Heart left ventricle (tissue), 16 donors: ENCODE measurements at regions of chr7 and their contacts with region 1.

Region 1: DNA sequence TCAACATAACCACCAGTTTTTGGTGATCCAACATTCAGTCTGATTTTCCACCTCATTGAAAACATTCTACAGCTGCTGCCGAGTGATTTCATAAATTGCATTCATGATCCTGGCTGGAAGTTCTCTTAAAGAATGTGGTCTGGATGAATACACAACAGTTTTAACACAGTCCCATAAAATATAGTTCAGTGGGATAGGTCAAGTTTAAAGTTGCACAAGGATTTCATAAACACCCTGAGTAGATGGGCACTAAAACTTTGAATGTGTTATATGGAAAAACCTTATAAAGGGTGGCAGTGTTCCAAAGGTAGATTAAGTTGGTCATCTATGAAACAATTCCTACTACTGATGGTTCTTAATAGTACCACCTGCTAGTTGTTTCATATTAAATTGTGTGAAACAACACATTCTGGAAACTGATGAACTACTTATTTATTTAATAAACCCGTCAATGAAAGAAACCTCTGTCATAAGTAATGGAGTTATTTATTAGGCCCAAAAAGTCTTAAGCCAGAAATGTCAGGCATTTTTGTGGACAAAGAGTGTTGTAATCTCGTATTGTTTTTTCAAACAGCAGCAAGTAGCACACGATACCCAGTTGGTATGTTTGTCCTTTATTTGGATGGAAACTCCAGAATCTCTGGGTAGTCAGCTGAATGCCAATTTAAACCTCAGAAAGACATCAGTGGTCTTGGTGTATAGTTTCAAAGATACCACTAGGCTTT is 14.3 kb upstream of the RPA3 start:
- DNase-seq: no peak
- ATAC-seq: peak in 1 of 4 donors; percentile 49
- H3K4me3 ChIP-seq: no peak overlapping the region
- H3K27ac ChIP-seq: peak overlapping the region in 2 of 12 donors; percentile 11 to 54
- H3K4me1 ChIP-seq: peaks cover 0 to 24% (median 11%) of the 10 kb centered on the region in 12 donors
- H3K27me3 ChIP-seq: no peaks in the 10 kb centered on the region
- CTCF ChIP-seq: no peak
- POLR2A ChIP-seq: no peak

Region 2: DNA sequence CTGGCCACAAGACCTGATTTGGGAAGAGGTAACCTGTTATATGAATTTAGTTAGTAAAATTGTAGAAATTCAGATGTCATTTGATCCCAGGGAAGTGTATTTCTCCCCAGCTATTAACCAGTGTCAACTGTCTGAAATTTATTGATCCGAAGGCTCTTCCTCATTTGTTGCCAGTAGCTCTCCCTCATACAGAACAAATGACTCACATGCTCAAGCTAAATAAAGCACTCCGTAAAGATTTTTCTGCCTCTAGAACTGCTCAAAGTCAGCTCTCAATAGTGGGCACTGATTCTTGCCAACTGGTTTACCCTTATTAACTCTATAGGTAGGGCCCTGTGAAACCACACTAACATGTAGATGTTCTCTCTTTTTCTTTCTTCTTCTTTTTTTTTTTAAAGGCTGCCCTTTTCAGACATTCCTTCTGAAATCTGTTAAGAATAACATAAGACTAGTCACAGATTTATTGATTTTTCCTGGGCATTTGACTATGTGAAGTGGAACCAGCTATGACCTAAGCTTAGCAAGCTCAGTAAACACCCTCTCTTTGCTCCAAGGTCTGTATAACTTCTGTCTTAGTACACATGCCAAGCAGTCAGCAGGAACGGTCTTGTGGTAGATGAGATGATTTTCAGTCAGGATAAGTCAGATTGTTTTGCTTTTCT is 36.1 kb before region 1 on chr7:
- intact Hi-C with region 1: loop called in 2 of 10 experiments (anchors 5 kb)
- DNase-seq: no peak
- ATAC-seq: peak in 2 of 4 donors; percentile 45 to 56
- H3K4me3 ChIP-seq: no peak overlapping the region
- H3K27ac ChIP-seq: peak overlapping the region; percentile 15 to 79 (median 62)
- H3K4me1 ChIP-seq: peaks cover 0 to 68% (median 48%) of the 10 kb centered on the region in 12 donors
- H3K27me3 ChIP-seq: no peaks in the 10 kb centered on the region
- CTCF ChIP-seq: no peak
- POLR2A ChIP-seq: no peak